ENCODE measurements at regions of chr9 and their contacts with region 1.

Region 1: GRCh38 chr9:101530077-101530711 is 3.5 kb upstream of the RNF20 start:
- DNase-seq: peak; percentile 64
- ATAC-seq: peak; percentile 31 to 33

Region 2: GRCh38 chr9:101398068-101398929 is 131.9 kb before region 1 on chr9 and contains the starts of genes MRPL50 and ZNF189:
- intact Hi-C with region 1: loop called in 1 of 2 experiments (anchors 10 kb)
- DNase-seq: peak; percentile 99
- ATAC-seq: peak; percentile 98 to 99
- total RNA-seq, gene MRPL50: 15.0 to 19.9 TPM
- total RNA-seq, gene ZNF189: 18.9 to 36.7 TPM

Region 3: DNA sequence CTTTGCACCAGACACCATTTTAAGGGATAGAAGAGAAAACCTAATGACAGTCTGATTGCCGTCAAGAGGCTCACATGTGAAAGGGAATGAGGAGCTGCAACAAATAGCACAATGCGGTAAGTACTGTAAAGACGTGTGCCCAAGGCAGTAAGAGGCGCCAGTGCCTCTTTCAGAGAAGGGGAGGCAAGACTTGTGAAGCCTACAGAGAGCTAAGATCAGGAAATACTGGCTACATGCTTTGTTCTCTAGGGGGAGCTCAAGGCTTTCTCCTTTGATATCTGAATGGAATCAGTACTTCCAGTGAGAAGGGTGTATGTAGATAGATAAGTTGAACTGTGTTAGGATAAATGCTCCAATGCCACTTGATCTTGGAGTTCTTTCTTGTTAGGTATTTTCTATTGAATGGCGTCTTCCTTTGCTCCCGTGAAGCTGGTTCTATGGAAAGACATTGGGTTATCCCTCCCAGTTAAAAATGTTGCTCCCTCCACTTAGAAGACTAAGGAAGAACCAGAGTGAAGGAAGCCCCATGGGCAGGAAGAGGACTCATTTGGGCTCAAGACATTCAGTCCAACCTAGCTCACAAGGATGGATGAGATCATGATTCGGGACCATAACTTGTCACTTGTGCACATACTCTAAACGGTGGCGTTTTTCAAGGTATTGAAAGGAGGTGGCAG is 71.1 kb before region 1 on chr9:
- intact Hi-C with region 1: loop called (anchors 2 to 5 kb)
- DNase-seq: no peak
- ATAC-seq: peak; percentile 84 to 92

Region 4: DNA sequence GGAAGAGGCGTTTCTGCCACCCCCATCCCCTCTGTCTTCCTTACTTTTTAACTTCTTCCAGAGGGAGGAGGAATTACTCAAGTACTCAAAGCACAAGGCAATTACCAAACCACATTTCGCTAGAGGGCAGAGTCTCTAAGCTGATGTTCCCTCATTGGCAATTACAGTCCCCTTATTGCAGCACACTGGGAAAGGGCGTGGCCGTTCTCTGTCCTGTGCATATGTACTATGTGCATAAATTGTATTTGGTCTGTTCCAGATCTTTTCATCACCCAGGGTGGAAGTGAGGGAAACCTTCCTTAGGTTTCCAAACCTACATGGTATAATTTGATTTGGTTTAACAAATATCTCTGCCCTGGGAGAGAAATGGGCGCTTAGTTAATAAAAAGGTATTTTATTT is 64.8 kb before region 1 on chr9:
- intact Hi-C with region 1: loop called (anchors 2 to 5 kb)
- DNase-seq: no peak
- ATAC-seq: peak; percentile 81

Region 5: GRCh38 chr9:101618698-101619097 is 88.5 kb after region 1 on chr9:
- intact Hi-C with region 1: no loop called
- DNase-seq: no peak
- ATAC-seq: no peak

Region 6: GRCh38 chr9:101814064-101814463 is 283.9 kb after region 1 on chr9:
- intact Hi-C with region 1: no loop called
- DNase-seq: no peak
- ATAC-seq: no peak